ENCODE measurements at regions of chr9 and their contacts with region 1.

Region 1: DNA sequence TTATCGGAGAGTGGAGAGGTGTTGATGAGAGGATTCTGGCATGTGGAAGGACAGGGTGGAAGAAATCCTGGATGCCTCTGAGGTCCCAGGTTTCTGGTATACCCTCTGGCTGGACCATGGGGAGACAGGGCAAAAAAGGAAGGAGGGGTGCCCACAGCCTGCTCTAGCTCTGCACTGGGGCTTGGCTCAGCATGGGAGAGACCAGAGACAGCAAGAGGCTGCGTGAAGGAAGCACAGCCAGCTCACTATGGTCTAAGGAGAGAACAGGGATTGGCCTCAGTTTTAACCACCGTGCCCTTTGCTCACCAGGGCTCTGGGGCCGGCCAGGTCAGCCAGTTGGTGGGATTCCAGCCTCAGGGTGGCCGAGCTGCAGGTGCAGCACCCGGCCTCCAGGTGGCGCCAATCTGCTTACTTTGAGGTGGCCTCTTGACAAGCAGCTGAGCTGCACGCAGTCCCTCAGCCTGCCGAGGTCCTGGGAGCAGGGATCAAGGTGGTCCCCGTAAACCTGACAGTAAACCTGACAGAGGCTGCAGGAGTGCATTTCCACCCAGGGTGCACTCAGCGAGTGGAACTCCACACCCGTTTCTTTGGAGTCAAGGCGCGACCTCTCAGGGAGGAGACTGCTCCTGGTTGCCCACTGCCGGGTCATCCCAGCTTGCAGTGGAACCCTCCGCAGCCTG is 25.0 kb upstream of the SPTLC1 start:
- DNase-seq: peak; percentile 72
- H3K4me3 ChIP-seq: no peak overlapping the region
- H3K27ac ChIP-seq: no peak overlapping the region
- H3K4me1 ChIP-seq: peaks cover 5% of the 10 kb centered on the region
- H3K27me3 ChIP-seq: no peaks in the 10 kb centered on the region
- CTCF ChIP-seq: peak; percentile 90 to 99
- POLR2A ChIP-seq: no peak

Region 2: DNA sequence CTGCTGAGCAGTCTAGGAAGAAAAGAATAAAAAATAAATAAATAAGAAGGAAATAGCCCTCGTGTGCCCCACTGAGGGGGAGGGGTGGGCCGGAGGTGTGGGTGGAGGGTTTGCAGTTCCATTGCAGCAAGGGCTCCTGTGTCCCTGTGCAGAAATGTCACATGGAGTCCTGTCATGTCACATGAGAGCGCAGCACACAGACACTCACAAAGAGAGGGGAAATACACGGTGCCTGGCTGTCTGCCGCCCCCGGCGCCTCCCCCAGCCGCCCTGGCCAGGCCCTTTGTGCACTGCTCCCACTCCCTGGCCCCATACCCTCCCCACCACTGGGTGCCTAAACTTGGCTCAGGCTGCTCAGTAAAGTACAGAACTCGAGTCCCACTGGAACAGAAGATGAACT is 30.6 kb after region 1 on chr9:
- CTCF ChIA-PET with region 1: interaction called, 10 read pairs
- POLR2A ChIA-PET with region 1: no interaction called
- dilution Hi-C with region 1: no loop called
- intact Hi-C with region 1: no loop called
- DNase-seq: no peak
- H3K4me3 ChIP-seq: no peak overlapping the region
- H3K27ac ChIP-seq: no peak overlapping the region
- H3K4me1 ChIP-seq: no peaks in the 10 kb centered on the region
- H3K27me3 ChIP-seq: peaks cover 0 to 9% of the 10 kb centered on the region in 2 experiments
- CTCF ChIP-seq: no peak
- POLR2A ChIP-seq: no peak

Region 3: DNA sequence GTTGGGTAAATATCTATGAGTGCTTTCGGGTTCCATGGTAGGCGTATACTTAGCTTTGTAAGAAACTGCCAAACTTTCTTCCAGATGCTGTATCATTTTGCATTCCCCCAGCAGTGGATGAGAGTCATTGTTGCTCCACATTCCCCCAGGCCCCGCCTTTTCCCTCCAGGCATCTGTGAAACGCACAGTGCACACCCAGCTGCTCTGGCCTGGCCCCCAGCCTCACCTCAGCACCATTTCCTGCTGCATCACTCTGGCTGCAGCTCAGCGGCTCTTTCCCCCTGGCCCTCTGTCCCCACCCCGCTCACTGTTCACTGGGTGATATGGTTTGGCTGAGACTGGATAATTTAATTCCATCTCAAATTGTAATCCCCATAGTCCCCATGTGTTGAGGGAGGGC is 51.6 kb after region 1 on chr9:
- CTCF ChIA-PET with region 1: interaction called, 19 read pairs
- POLR2A ChIA-PET with region 1: no interaction called
- dilution Hi-C with region 1: no loop called
- intact Hi-C with region 1: no loop called
- DNase-seq: no peak
- H3K4me3 ChIP-seq: no peak overlapping the region
- H3K27ac ChIP-seq: no peak overlapping the region
- H3K4me1 ChIP-seq: no peaks in the 10 kb centered on the region
- H3K27me3 ChIP-seq: peaks cover 2 to 6% of the 10 kb centered on the region in 2 experiments
- CTCF ChIP-seq: no peak
- POLR2A ChIP-seq: no peak

Region 4: GRCh38 chr9:92224177-92224576 is 84.0 kb after region 1 on chr9:
- CTCF ChIA-PET with region 1: interaction called, 62 read pairs
- POLR2A ChIA-PET with region 1: no interaction called
- dilution Hi-C with region 1: no loop called
- intact Hi-C with region 1: no loop called
- DNase-seq: no peak
- H3K4me3 ChIP-seq: no peak overlapping the region
- H3K27ac ChIP-seq: no peak overlapping the region
- H3K4me1 ChIP-seq: no peaks in the 10 kb centered on the region
- H3K27me3 ChIP-seq: no peaks in the 10 kb centered on the region
- CTCF ChIP-seq: no peak
- POLR2A ChIP-seq: no peak

Region 5: GRCh38 chr9:92242260-92243136 is 102.3 kb after region 1 on chr9:
- CTCF ChIA-PET with region 1: interaction called, 239 read pairs
- POLR2A ChIA-PET with region 1: no interaction called
- dilution Hi-C with region 1: no loop called
- intact Hi-C with region 1: loop called (anchors 1 kb)
- DNase-seq: peak; percentile 22
- H3K4me3 ChIP-seq: no peak overlapping the region
- H3K27ac ChIP-seq: no peak overlapping the region
- H3K4me1 ChIP-seq: no peaks in the 10 kb centered on the region
- H3K27me3 ChIP-seq: no peaks in the 10 kb centered on the region
- CTCF ChIP-seq: peak; percentile 9 to 45
- POLR2A ChIP-seq: no peak

Region 6: DNA sequence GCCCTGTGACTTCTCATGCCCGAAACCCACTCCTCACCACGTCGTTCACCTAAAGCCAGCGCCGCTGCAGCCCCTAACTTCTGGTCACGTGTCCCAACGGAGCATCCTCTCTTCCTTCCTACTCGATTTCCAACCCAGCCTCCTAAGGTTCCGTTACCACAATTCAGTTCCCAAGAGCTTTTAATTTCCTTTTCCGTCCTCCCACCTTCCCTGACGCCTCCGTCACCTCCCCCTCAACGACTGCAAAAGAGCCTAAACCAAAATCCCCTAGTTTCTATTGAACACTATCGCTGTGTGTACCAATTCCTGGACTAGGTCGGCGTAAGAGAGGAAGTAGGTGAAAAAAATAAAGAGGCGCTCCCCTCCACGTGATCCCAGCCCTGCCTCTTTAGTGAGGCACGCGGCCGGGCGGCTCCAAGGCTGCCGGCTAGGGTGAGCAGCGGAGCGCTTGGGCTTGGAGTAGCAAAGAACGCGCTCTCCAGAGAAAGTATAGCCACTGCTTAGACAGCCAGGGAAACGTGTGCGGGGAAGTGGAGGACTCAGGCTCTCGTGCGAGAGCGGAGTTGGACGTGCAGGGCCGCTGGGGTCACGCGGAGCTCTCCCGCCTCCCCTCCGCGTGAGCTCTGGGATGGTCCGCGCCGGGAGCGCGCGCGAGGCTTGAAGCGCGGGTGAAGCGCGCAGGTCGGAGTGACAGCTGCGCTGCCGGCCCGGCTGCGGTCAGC is 185.2 kb after region 1 on chr9 and contains the starts of genes CENPP and NOL8:
- CTCF ChIA-PET with region 1: interaction called, 14 read pairs
- POLR2A ChIA-PET with region 1: no interaction called
- dilution Hi-C with region 1: no loop called
- intact Hi-C with region 1: no loop called
- DNase-seq: peak; percentile 93
- H3K4me3 ChIP-seq: peak within 1 kb of the TSS; percentile 32 to 91 (median 67)
- H3K27ac ChIP-seq: peak within 1 kb of the TSS; percentile 89
- H3K4me1 ChIP-seq: peaks cover 13% of the 10 kb centered on the region
- H3K27me3 ChIP-seq: no peaks in the 10 kb centered on the region
- CTCF ChIP-seq: no peak
- POLR2A ChIP-seq: peak; percentile 85
- total RNA-seq, gene CENPP: 8.7 and 12.0 TPM in 2 replicates
- total RNA-seq, gene NOL8: 36.1 and 41.6 TPM in 2 replicates

Region 7: DNA sequence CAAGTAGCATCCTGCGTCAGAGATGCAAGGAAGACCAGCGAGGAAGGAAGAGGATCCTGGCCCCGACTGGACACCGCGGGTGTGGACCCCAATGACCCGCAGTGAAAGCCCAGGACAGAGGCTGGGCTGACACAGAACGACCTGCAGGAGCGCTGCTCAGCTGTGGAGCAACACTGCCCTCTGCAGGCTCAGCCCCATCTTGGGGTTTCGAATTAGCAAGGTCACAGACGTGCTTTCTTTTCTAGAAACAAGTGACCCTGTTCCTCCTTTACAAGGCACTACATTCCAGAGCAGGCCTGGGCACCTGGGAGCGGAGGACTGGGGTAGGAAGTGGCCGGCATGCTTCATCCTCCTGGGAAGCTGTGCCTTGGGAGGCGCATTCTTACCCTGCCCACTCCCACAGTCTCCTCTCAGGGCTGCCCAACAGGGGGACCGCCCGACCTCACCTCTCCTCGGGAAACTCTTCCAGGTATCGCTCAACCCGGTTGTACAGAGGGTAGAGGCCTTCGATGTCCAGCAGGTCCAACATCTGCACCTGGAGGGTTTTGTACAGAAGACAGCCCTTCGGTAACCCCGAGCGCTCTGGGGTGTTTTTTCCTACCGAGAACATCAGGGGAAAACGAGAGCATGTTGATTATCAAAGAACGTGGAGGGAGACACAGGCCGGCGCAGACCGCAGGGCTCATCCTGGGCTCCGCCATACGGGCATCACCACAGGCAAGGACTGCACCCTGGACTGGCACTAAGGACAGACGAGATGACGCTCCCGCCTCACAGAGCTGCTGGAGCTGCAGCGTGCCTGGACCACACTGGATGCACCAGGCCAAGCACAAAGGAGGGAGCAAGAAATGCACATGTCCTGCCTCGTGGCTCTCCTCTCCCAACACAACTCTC is 494.7 kb after region 1 on chr9:
- CTCF ChIA-PET with region 1: interaction called, 26 read pairs
- POLR2A ChIA-PET with region 1: no interaction called
- dilution Hi-C with region 1: no loop called
- intact Hi-C with region 1: loop called (anchors 1 kb)
- DNase-seq: peak; percentile 78
- H3K4me3 ChIP-seq: no peak overlapping the region
- H3K27ac ChIP-seq: no peak overlapping the region
- H3K4me1 ChIP-seq: no peaks in the 10 kb centered on the region
- H3K27me3 ChIP-seq: no peaks in the 10 kb centered on the region
- CTCF ChIP-seq: peak; percentile 98
- POLR2A ChIP-seq: no peak